Activated CD4-positive, alpha-beta T cell treated with anti-CD3 and anti-CD28 coated beads, Interleukin-2, amount 10 ng/mL, durations not matched to agents 24 days and 14 days (primary cell): ENCODE measurements at regions of chr20 and their contacts with region 1.

Region 1: DNA sequence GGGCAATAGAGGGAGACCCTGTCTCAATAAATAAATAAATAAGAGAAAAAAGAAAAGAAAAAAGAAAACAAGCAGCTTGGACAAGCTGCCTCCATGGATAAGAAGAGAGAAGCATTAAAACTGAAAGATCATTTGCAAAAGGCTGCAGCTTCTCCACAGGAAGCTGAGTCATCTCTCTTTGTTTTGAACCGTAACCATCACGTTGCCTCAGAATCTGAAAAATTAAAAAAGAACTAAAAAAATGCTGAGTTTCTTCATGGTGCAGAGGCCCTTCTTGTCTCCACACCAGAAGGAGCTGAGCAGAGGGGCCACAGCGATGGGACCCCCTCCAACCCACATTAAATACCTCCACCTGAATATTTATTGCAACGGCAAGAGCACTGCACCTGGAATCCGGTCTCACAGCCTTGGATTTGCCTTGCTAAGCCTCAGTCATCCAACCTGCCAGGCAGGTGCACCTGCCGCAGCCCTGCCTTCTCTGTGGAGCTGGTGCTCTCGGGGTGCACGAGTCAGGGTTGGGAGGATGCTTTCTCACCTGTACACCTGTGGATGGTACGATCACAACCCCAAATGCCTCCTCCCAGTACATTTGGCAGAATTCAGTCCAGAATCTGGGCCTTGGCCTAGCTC is 28.1 kb downstream of the TOX2 start:
- DNase-seq: peak; percentile 82
- H3K4me3 Mint-ChIP-seq: peak overlapping the region; percentile 55
- H3K27ac Mint-ChIP-seq: peak overlapping the region; percentile 79
- H3K4me1 Mint-ChIP-seq: peaks cover 70% of the 10 kb centered on the region
- H3K27me3 Mint-ChIP-seq: peaks cover 21% of the 10 kb centered on the region

Region 2: DNA sequence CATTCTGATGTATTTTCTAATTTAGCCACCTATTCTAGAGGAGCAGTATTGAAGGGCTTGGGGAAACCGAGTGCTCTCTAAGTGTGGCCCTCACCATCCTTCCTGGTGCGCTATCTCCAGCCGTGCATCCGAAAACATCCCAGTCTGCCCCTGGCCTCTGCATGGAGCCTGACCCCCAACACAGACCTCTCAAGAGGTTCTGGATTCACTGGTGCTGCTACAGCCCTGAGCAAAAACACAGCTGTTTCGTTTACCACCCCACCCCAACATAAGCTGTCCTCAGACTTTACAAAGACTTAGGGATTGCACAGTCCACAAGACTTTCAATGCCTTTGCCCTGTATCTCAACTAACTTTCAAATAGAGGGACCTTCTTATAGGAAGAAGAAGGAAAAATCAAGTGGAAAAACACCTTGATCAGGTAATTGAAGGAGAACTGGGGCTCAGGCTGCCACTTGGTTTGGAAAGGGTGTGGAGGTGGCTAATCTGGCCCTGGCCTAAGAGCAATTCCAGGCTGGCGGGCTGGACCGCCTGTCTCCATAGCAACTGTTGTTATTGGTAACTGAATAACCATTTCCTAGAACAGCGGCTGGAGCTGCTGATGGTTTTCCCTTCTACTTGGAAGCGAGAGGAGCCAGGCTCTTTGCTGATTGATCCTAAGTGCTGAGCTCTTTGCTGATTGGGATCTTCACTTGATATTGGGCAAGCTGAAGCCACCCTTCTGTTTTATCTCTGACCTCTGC is 118.3 kb before region 1 on chr20:
- intact Hi-C with region 1: no loop called
- DNase-seq: peak; percentile 46
- H3K4me3 Mint-ChIP-seq: no peak overlapping the region
- H3K27ac Mint-ChIP-seq: no peak overlapping the region
- H3K4me1 Mint-ChIP-seq: peaks cover 4% of the 10 kb centered on the region
- H3K27me3 Mint-ChIP-seq: peaks cover 2% of the 10 kb centered on the region

Region 3: GRCh38 chr20:43925801-43926200 is 17.0 kb before region 1 on chr20:
- intact Hi-C with region 1: loop called (anchors 2 kb)
- DNase-seq: no peak
- H3K4me3 Mint-ChIP-seq: peak overlapping the region; percentile 23
- H3K27ac Mint-ChIP-seq: no peak overlapping the region
- H3K4me1 Mint-ChIP-seq: peaks cover 50% of the 10 kb centered on the region
- H3K27me3 Mint-ChIP-seq: peaks cover 35% of the 10 kb centered on the region